Gastrocnemius medialis (tissue), 4 donors: ENCODE measurements at regions of chr17 and their contacts with region 1.

Region 1: DNA sequence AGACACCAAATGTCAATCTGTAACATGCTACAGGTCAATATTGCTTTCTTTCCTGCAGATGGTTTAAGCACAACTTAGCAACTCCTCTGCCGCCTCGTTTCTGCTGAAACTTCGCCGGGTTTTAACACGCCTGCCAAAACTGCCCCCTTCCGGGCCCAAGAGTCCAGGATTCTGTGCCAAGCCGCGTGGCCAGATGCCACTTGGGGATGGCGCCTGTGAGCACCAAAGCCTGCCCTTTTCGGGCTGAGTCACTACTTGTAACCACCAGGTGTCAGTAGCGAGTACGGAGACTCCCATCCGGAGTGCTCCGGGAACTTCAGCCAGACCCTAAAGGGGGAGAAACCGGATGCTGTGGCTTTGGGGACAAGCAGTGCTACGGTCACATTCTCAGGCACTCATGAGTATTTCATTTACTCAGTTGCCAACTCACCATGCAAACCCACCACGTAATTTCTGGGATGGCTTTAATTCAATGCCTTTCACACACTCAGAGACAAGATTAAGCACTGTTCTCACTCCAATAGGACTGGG is 7.8 kb downstream of the PMP22 start:
- DNase-seq: peak; percentile 71 to 86
- ATAC-seq: peak; percentile 16 to 40
- H3K4me3 ChIP-seq: peak overlapping the region; percentile 26 to 97 (median 62)
- H3K27ac ChIP-seq: peak overlapping the region; percentile 94 to 98 (median 96)
- H3K4me1 ChIP-seq: peaks cover 43 to 71% of the 10 kb centered on the region in 2 donors
- H3K27me3 ChIP-seq: no peaks in the 10 kb centered on the region
- CTCF ChIP-seq: peak; percentile 63 to 94 (median 92)
- POLR2A ChIP-seq: peak in 1 of 2 donors; percentile 34

Region 2: GRCh38 chr17:15398736-15399331 is 141.5 kb after region 1 on chr17:
- in situ Hi-C with region 1: loop called in 3 of 4 experiments (anchors 25 kb)
- intact Hi-C with region 1: loop called (anchors 5 kb)
- DNase-seq: peak; percentile 42 to 80
- ATAC-seq: peak; percentile 86 to 88
- H3K4me3 ChIP-seq: peak overlapping the region in 1 of 4 donors; percentile 11
- H3K27ac ChIP-seq: peak overlapping the region; percentile 62 to 77 (median 68)
- H3K4me1 ChIP-seq: peaks cover 17 to 20% of the 10 kb centered on the region in 2 donors
- H3K27me3 ChIP-seq: no peaks in the 10 kb centered on the region
- CTCF ChIP-seq: no peak
- POLR2A ChIP-seq: peak in 1 of 2 donors; percentile 32

Region 3: GRCh38 chr17:15409721-15410250 is 152.5 kb after region 1 on chr17:
- in situ Hi-C with region 1: loop called (anchors 10 to 25 kb)
- intact Hi-C with region 1: no loop called
- DNase-seq: peak; percentile 38 to 46
- ATAC-seq: peak; percentile 32 to 47
- H3K4me3 ChIP-seq: peak overlapping the region in 1 of 4 donors; percentile 18
- H3K27ac ChIP-seq: peak overlapping the region; percentile 70 to 89 (median 78)
- H3K4me1 ChIP-seq: peaks cover 14 to 27% of the 10 kb centered on the region in 2 donors
- H3K27me3 ChIP-seq: no peaks in the 10 kb centered on the region
- CTCF ChIP-seq: no peak
- POLR2A ChIP-seq: peak in 1 of 2 donors; percentile 42

Region 4: DNA sequence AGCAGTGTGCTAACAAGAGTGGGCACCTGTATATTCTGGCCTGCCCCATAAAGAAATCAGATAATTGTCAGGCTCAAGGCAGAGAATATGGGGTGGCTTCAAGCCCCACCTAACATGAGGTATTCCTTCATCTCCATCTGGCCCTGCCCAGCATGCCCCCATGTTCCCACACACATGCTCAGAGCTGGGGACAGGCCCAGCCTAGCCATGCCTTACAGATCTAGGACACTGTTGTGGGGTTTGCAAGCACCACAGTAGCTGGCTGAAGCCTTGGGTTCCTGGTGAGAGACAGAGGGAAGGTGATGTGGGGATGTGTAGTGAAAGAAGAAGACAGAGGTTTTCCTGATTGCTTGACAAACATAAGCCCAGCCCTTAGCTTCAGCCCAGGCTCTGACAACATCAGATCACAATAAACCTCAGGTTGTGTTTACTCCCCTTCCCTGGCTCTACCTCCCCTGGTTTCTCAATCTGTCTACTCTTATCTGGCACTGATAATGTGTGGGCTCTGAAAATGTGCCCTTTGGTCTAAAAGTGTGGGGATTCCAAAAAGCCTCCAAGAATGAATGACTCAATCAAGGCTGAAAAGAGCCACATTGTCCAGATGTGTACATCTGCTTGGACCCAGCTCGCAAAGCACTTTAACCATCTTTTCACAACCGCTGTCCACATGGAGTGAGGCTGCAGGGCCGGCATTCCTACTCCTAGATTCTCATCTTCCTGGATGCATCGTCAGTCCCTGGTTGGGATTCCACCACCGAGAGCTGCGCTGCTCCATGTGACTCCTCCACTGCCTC is 175.7 kb after region 1 on chr17:
- in situ Hi-C with region 1: no loop called
- intact Hi-C with region 1: loop called (anchors 1 kb)
- DNase-seq: peak in 1 of 2 donors; percentile 37
- ATAC-seq: no peak
- H3K4me3 ChIP-seq: no peak overlapping the region
- H3K27ac ChIP-seq: peak overlapping the region; percentile 86 to 94 (median 89)
- H3K4me1 ChIP-seq: peaks cover 62 to 67% of the 10 kb centered on the region in 2 donors
- H3K27me3 ChIP-seq: no peaks in the 10 kb centered on the region
- CTCF ChIP-seq: no peak
- POLR2A ChIP-seq: no peak